ENCODE measurements at regions of chr7 and their contacts with region 1.

Region 1: GRCh38 chr7:151008511-151009323 is 15.6 kb downstream of the ATG9B start:
- DNase-seq: peak; percentile 70
- H3K4me3 Mint-ChIP-seq: peak overlapping the region; percentile 70
- H3K27ac Mint-ChIP-seq: peak overlapping the region; percentile 71
- H3K4me1 Mint-ChIP-seq: peaks cover 52% of the 10 kb centered on the region
- H3K27me3 Mint-ChIP-seq: no peaks in the 10 kb centered on the region

Region 2: DNA sequence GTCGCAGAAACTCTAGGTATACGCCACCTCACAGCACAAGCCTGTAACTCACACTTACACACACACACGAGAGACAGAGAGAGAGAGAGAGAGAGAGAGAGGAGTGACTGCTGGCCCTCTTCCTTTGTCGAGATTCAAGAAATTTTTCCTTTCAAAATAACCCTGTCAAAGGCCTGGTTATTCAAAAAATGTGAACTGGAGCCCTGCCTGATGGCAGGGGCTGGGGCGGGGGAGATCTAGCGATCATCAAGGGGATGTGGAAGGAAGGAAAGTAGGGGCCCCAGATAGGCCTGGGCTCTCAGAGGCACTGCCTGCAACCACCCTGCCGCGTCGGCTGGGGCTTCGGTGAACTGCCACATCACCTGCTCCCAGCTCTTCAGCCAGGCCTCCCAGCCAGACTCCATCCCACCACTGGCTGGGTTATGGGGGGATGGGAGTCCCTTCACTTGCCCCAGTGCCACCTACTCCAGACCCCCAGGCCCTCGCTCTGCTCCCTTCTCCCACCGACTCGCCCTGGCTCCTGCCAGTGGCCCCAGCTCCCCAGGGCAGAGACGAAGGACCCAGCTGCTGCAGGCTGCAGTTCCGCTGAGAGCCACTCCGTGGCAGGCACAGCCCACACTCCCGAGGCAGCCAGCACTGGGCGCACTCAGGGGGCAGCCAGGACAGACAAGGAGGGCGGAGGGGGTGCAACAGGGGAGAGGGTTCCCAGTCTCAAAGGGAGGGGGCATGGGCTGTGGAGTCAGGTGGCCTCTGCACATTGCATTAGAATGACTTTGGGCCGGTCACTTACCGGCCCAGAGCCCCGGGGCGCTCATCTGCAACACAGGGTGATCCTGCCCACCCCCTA is 45.9 kb before region 1 on chr7:
- CTCF ChIA-PET with region 1: interaction called, 10 read pairs
- intact Hi-C with region 1: no loop called
- DNase-seq: peak; percentile 68
- H3K4me3 Mint-ChIP-seq: no peak overlapping the region
- H3K27ac Mint-ChIP-seq: no peak overlapping the region
- H3K4me1 Mint-ChIP-seq: peaks cover 14% of the 10 kb centered on the region
- H3K27me3 Mint-ChIP-seq: peaks cover 16% of the 10 kb centered on the region

Region 3: GRCh38 chr7:150994141-150994964 is 14.4 kb before region 1 on chr7:
- CTCF ChIA-PET with region 1: interaction called, 19 read pairs
- intact Hi-C with region 1: no loop called
- DNase-seq: peak; percentile 52
- H3K4me3 Mint-ChIP-seq: peak overlapping the region; percentile 53
- H3K27ac Mint-ChIP-seq: no peak overlapping the region
- H3K4me1 Mint-ChIP-seq: peaks cover 41% of the 10 kb centered on the region
- H3K27me3 Mint-ChIP-seq: no peaks in the 10 kb centered on the region

Region 4: GRCh38 chr7:151181011-151181431 is 172.3 kb after region 1 on chr7:
- CTCF ChIA-PET with region 1: no interaction called
- intact Hi-C with region 1: no loop called
- DNase-seq: no peak
- H3K4me3 Mint-ChIP-seq: no peak overlapping the region
- H3K27ac Mint-ChIP-seq: no peak overlapping the region
- H3K4me1 Mint-ChIP-seq: no peaks in the 10 kb centered on the region
- H3K27me3 Mint-ChIP-seq: peaks cover 7% of the 10 kb centered on the region